ENCODE measurements at regions of chr5 and their contacts with region 1.

Region 1: GRCh38 chr5:95961617-95962474 is at the start of gene ELL2:
- DNase-seq: peak; percentile 99 to 100
- ATAC-seq: peak; percentile 93
- H3K4me3 ChIP-seq: peak within 1 kb of the TSS; percentile 79 to 86
- H3K27ac ChIP-seq: peak within 1 kb of the TSS; percentile 94 to 96
- H3K4me1 ChIP-seq: no peaks in the 10 kb centered on the region
- H3K27me3 ChIP-seq: no peaks in the 10 kb centered on the region
- total RNA-seq, gene ELL2: 107 to 207 TPM

Region 2: DNA sequence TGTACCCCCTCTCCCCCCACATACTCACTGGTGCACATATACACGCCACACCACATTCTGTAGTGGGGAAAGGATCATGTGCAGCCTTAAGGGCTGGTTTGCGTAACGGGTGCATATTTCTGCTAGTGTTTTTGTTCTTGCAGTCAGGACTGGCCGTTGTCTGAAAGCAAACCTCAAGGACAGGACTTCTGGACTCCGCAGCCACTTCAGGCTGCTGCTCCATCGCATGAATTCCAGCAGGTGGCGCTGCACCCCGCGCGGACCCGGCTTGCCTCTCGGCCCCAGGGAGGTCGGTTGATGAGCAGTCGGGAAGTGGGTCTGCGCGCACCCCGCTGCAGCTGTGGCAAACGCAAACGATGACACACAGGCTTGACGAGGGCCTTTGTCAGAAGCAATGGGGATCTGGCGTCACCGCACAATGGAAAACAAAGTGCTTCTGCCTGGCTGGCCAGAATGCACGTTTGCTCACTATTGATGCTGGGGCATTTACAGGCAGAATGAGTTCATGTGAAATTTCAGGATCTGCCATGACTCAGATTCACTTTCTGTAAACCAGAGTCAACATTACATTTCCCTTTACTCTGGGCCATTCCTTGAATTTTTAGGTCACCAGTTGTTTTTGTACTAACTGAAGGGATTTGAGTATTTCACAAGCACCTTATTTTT is 103.1 kb before region 1 on chr5:
- intact Hi-C with region 1: loop called (anchors 2 to 5 kb)
- DNase-seq: peak; percentile 97 to 98
- ATAC-seq: peak; percentile 95
- H3K4me3 ChIP-seq: peak overlapping the region; percentile 9 to 27
- H3K27ac ChIP-seq: peak overlapping the region; percentile 47 to 100
- H3K4me1 ChIP-seq: peaks cover 0 to 7% of the 10 kb centered on the region in 2 donors
- H3K27me3 ChIP-seq: no peaks in the 10 kb centered on the region

Region 3: GRCh38 chr5:96017951-96018350 is 56.1 kb after region 1 on chr5:
- intact Hi-C with region 1: loop called (anchors 5 to 10 kb)
- DNase-seq: no peak
- ATAC-seq: no peak
- H3K4me3 ChIP-seq: no peak overlapping the region
- H3K27ac ChIP-seq: no peak overlapping the region
- H3K4me1 ChIP-seq: peaks cover 0 to 3% of the 10 kb centered on the region in 2 donors
- H3K27me3 ChIP-seq: no peaks in the 10 kb centered on the region

Region 4: DNA sequence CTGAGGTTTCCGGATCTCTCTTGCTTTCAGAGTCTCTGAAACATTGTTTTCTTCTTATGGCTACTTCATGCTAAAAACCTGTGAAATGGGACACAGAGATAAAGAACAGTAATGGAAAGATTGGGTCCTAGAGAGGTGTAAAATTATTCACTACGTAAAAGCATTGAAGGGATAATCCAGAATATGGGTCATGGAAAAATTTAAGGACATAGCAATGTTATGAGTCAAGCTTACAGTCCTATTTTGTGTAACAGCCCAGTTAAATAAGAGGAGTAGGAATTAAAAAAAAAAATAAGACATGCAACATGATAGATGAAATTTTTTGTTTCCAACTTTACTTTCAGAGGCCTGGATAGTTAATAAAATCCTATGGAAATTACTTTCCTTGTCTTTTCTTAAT is 61.7 kb after region 1 on chr5:
- intact Hi-C with region 1: loop called (anchors 5 to 10 kb)
- DNase-seq: no peak
- ATAC-seq: peak; percentile 80
- H3K4me3 ChIP-seq: no peak overlapping the region
- H3K27ac ChIP-seq: no peak overlapping the region
- H3K4me1 ChIP-seq: peaks cover 0 to 6% of the 10 kb centered on the region in 2 donors
- H3K27me3 ChIP-seq: no peaks in the 10 kb centered on the region

Region 5: GRCh38 chr5:96125231-96125891 is 163.5 kb after region 1 on chr5:
- intact Hi-C with region 1: loop called in 1 of 2 experiments (anchors 5 kb)
- DNase-seq: no peak
- ATAC-seq: peak; percentile 57
- H3K4me3 ChIP-seq: peak overlapping the region; percentile 14 to 15
- H3K27ac ChIP-seq: no peak overlapping the region
- H3K4me1 ChIP-seq: peaks cover 0 to 2% of the 10 kb centered on the region in 2 donors
- H3K27me3 ChIP-seq: no peaks in the 10 kb centered on the region

Region 6: GRCh38 chr5:96226941-96227552 is 265.2 kb after region 1 on chr5:
- intact Hi-C with region 1: loop called in 1 of 2 experiments (anchors 5 kb)
- DNase-seq: peak; percentile 54 to 76
- ATAC-seq: peak; percentile 50
- H3K4me3 ChIP-seq: peak overlapping the region in 1 of 2 donors; percentile 64
- H3K27ac ChIP-seq: peak overlapping the region; percentile 38 to 95
- H3K4me1 ChIP-seq: peaks cover 0 to 3% of the 10 kb centered on the region in 2 donors
- H3K27me3 ChIP-seq: no peaks in the 10 kb centered on the region

Region 7: DNA sequence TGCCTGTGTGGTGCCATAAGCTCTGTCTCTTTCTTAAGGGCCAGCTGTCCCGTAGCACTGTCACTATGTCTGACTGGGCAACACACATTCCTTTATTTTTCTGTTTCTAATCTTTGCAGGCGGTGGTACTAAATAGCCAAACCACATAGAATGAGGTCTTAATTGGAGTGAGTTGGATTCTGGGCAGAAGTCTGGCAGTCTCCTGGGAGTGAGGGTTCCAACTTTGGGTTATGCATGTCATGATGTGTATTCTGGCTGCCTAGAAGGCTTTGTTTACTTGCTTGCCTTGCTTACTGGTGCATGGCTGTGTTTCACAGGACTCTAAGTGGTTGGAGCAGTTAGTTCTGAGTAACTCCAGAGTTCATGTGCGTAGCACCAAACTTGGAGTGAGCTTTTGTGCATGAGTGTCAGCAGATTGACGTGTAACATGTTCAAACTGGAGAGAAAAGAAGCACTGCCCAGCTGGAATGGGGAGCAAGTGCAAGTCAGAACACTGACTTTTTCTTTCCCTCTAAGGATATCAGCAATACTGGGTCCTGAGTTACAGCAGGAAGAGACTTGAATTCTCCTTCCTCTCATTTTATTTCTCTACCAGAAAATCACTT is 285.4 kb after region 1 on chr5:
- intact Hi-C with region 1: loop called in 1 of 2 experiments (anchors 5 kb)
- DNase-seq: peak in 1 of 2 donors; percentile 47
- ATAC-seq: peak; percentile 86
- H3K4me3 ChIP-seq: peak overlapping the region in 1 of 2 donors; percentile 10
- H3K27ac ChIP-seq: peak overlapping the region; percentile 92 to 95
- H3K4me1 ChIP-seq: peaks cover 0 to 11% of the 10 kb centered on the region in 2 donors
- H3K27me3 ChIP-seq: no peaks in the 10 kb centered on the region